ENCODE measurements at regions of chr15 and their contacts with region 1.

Region 1: DNA sequence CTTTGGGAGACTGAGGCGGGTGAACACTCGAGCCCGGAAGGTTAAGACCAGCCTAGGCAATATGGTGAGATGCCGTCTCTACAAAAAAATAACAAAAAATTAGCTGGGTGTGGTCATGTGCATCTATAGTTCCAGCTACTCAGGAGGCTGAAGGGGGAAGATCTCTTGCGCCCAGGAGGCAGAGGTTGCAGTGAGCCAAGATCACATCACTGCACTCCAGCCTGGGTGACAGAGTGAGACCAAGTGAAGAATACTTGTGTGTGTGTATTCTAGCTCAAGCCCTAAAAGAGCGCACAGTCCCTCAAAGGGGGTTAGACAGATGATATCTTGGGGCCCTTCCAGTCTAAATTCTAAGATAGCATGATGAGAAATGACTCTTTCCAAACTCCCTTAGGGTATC is 23.7 kb downstream of the DAPK2 start:
- DNase-seq: no peak
- ATAC-seq: no peak
- H3K4me3 ChIP-seq: no peak overlapping the region
- H3K27ac ChIP-seq: no peak overlapping the region
- H3K4me1 ChIP-seq: peaks cover 2% of the 10 kb centered on the region
- H3K27me3 ChIP-seq: no peaks in the 10 kb centered on the region
- CTCF ChIP-seq: no peak

Region 2: GRCh38 chr15:63514531-63514943 is 508.0 kb before region 1 on chr15:
- CTCF ChIA-PET with region 1: no interaction called
- POLR2A ChIA-PET with region 1: no interaction called
- in situ Hi-C with region 1: no loop called
- intact Hi-C with region 1: no loop called
- DNase-seq: peak; percentile 55
- ATAC-seq: no peak
- H3K4me3 ChIP-seq: no peak overlapping the region
- H3K27ac ChIP-seq: peak overlapping the region; percentile 81
- H3K4me1 ChIP-seq: peaks cover 85% of the 10 kb centered on the region
- H3K27me3 ChIP-seq: no peaks in the 10 kb centered on the region
- CTCF ChIP-seq: no peak

Region 3: DNA sequence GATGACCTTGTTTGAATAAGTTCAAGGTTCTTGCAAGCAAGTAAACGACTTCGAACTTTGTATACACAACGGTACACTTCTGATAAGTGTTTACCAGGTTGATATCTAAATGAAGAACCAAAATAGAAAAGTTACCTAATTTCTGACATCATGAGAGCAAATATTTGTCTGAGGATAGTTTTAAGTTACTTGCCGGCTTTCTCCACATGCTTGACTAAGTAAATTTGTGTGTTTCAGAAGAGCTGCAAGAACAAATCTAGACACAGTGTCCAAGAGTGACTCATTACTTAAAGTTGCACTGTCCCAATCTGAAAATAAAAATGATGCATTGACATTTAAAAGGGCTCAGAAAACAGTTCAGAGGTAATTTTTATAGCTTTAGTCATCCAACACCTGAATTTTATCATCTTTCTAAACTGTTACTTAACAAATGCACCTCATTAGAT is 304.0 kb before region 1 on chr15:
- CTCF ChIA-PET with region 1: no interaction called
- POLR2A ChIA-PET with region 1: no interaction called
- in situ Hi-C with region 1: no loop called
- intact Hi-C with region 1: no loop called
- DNase-seq: no peak
- ATAC-seq: no peak
- H3K4me3 ChIP-seq: no peak overlapping the region
- H3K27ac ChIP-seq: no peak overlapping the region
- H3K4me1 ChIP-seq: no peaks in the 10 kb centered on the region
- H3K27me3 ChIP-seq: no peaks in the 10 kb centered on the region
- CTCF ChIP-seq: no peak

Region 4: GRCh38 chr15:63922261-63922904 is 100.2 kb before region 1 on chr15:
- CTCF ChIA-PET with region 1: interaction called, 11 read pairs
- POLR2A ChIA-PET with region 1: no interaction called
- in situ Hi-C with region 1: no loop called
- intact Hi-C with region 1: no loop called
- DNase-seq: no peak
- ATAC-seq: no peak
- H3K4me3 ChIP-seq: no peak overlapping the region
- H3K27ac ChIP-seq: no peak overlapping the region
- H3K4me1 ChIP-seq: no peaks in the 10 kb centered on the region
- H3K27me3 ChIP-seq: no peaks in the 10 kb centered on the region
- CTCF ChIP-seq: no peak

Region 5: GRCh38 chr15:63953524-63953923 is 69.0 kb before region 1 on chr15:
- CTCF ChIA-PET with region 1: no interaction called
- POLR2A ChIA-PET with region 1: no interaction called
- in situ Hi-C with region 1: no loop called
- intact Hi-C with region 1: no loop called
- DNase-seq: no peak
- ATAC-seq: no peak
- H3K4me3 ChIP-seq: no peak overlapping the region
- H3K27ac ChIP-seq: no peak overlapping the region
- H3K4me1 ChIP-seq: no peaks in the 10 kb centered on the region
- H3K27me3 ChIP-seq: no peaks in the 10 kb centered on the region
- CTCF ChIP-seq: no peak

Region 6: DNA sequence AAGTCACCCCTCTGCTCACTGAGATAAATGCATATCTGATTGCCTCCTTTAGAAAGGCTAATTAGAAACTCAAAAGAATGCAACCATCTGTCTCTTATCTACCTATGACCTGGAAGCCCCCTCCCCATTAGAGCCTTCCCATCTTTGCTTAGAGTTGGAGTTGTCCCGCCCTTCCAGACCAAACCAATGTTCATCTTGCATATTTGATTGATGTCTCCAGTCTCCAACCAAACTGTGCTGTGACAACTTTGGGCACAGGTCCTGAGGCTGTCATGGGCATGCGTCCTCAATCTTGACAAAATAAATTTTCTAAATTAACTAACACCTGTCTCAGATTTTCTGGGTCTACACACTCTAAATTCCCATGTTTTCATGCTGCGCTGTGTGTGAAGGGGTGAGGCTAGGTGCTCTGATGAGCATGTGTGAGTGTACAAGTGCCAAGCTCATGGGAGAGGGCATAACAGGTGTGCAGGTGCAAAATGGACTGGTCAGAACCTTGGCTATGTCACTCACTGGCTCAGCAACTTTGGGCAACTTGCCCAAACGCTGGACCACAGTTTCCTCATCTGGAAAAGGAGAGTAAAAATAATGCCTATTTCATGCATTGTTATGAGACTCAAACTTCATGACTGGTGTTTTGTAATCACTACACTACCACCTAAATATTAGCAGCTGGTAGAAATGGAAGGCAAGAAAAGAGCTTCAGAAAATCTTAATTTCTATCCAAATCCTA is 16.5 kb after region 1 on chr15:
- CTCF ChIA-PET with region 1: no interaction called
- POLR2A ChIA-PET with region 1: no interaction called
- in situ Hi-C with region 1: no loop called
- intact Hi-C with region 1: no loop called
- DNase-seq: no peak
- ATAC-seq: no peak
- H3K4me3 ChIP-seq: no peak overlapping the region
- H3K27ac ChIP-seq: no peak overlapping the region
- H3K4me1 ChIP-seq: no peaks in the 10 kb centered on the region
- H3K27me3 ChIP-seq: no peaks in the 10 kb centered on the region
- CTCF ChIP-seq: no peak

Measured in Panc1 (cell line).